AG04449 (cell line): ENCODE measurements at regions of chr6 and their contacts with region 1.

Region 1: DNA sequence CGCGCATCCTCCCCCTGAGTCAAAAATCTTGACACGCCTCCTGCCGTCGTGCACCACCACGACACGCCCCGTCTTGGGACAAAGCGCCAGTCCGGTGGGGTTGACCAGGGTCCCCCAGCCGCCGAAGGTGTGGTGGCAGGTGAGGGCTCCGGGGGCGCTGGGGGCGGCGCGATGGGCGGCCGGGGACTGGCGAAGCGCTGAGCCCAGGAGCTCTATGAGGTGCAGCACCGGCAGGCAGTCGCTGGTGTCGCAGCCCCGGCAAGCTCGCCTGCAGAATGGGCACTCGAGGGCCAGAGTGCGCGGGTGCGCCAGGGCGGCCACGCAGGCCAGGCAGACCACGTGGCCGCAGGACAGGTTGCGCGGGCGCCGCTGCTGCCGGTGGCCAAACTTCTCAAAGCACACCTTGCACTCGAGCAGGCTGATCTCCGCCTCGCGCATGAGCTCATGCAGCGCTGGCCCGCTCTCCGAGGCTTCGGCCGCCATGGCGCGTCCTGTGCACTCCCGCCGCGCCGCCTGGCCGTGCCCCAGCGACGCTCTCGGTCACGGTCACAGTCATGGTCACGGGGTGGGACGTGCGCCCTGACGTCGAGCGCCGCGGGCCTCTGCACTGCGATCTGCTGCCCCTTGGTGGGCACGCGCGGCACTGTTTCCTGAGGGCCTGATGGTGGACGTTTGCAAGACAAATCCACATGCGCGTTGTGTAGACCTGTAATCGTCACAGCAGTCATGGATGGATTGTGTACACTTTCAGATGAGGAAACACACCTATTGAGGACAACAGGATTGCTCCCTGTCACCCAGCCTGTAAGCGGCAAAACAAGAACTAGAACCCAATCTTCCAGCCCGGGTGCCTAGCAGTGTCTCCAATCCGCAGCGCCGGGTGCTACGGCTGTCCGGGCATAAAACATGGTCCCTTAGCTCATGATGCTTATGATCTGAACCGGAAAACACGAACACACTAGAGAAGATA is at the start of gene NHLRC1:
- DNase-seq: no peak
- H3K4me3 ChIP-seq: peak within 1 kb of the TSS; percentile 62
- CTCF ChIP-seq: peak; percentile 97

Region 2: DNA sequence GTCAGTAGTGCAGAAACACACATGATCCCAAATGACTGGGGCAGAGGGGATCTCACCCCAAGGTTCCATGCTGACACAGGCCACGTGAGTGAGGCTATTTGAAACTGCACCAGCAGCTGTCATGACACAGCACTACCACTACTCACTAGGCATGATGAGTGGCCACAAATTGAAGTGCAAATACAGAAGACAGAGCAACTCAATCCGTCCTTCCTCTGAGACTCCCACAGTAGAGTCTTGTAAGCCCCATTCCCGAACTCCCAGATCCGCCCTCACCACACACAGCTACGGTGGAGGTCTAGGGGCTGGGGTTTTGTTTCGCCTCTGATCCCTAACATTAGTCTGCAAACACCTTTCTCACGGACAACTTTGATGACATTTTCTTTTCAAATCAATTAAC is 302.4 kb before region 1 on chr6:
- CTCF ChIA-PET with region 1: interaction called, 73 read pairs
- POLR2A ChIA-PET with region 1: no interaction called
- DNase-seq: no peak
- H3K4me3 ChIP-seq: no peak overlapping the region
- CTCF ChIP-seq: no peak

Region 3: DNA sequence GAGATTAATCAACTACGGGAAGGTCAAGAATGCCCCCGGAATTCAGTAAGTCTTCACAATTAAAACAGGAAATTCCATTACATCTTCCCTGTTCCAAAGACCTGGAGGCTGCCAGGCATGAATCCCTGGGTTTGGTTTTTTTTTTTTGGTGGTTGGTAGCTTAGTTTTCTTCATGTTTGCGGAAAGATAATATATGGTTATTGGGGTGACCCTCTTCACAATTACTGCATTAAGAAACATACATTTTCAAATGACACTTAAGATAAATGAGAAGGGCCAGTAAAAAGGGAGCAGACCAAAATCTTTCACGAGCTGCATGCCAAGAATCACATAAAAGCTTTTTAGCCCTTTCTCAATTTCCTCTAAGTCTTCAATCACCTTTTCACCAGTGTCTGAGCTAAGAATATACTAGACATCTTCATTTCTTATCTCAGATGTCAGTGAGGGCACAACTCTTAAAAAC is 199.0 kb before region 1 on chr6:
- CTCF ChIA-PET with region 1: interaction called, 10 read pairs
- POLR2A ChIA-PET with region 1: no interaction called
- DNase-seq: no peak
- H3K4me3 ChIP-seq: no peak overlapping the region
- CTCF ChIP-seq: no peak

Region 4: GRCh38 chr6:17987576-17988421 is 134.6 kb before region 1 on chr6 and contains the start of gene KIF13A:
- CTCF ChIA-PET with region 1: interaction called, 21 read pairs
- POLR2A ChIA-PET with region 1: no interaction called
- DNase-seq: no peak
- H3K4me3 ChIP-seq: peak within 1 kb of the TSS; percentile 79
- CTCF ChIP-seq: peak; percentile 44

Region 5: GRCh38 chr6:18138906-18139305 is 16.5 kb after region 1 on chr6:
- CTCF ChIA-PET with region 1: interaction called, 14 read pairs
- POLR2A ChIA-PET with region 1: no interaction called
- DNase-seq: no peak
- H3K4me3 ChIP-seq: no peak overlapping the region
- CTCF ChIP-seq: no peak

Region 6: GRCh38 chr6:18171871-18172270 is 49.5 kb after region 1 on chr6:
- CTCF ChIA-PET with region 1: no interaction called
- POLR2A ChIA-PET with region 1: no interaction called
- DNase-seq: no peak
- H3K4me3 ChIP-seq: no peak overlapping the region
- CTCF ChIP-seq: no peak